ENCODE measurements at regions of chr12 and their contacts with region 1.

Region 1: GRCh38 chr12:56189176-56189917 is at the start of gene SMARCC2:
- DNase-seq: peak; percentile 94
- ATAC-seq: peak; percentile 82
- H3K4me3 Mint-ChIP-seq: peak within 1 kb of the TSS; percentile 82
- H3K27ac Mint-ChIP-seq: peak within 1 kb of the TSS; percentile 96
- H3K4me1 Mint-ChIP-seq: peaks cover 38% of the 10 kb centered on the region
- H3K27me3 Mint-ChIP-seq: no peaks in the 10 kb centered on the region
- total RNA-seq, gene SMARCC2: 96.9 to 123 TPM

Region 2: GRCh38 chr12:56127888-56128669 is 61.3 kb before region 1 on chr12 and contains the start of gene ESYT1:
- CTCF ChIA-PET with region 1: interaction called, 112 read pairs
- POLR2A ChIA-PET with region 1: interaction called, 13 read pairs
- intact Hi-C with region 1: loop called (anchors 1 to 2 kb)
- DNase-seq: peak; percentile 98
- ATAC-seq: peak; percentile 96
- H3K4me3 Mint-ChIP-seq: peak within 1 kb of the TSS; percentile 93
- H3K27ac Mint-ChIP-seq: peak within 1 kb of the TSS; percentile 95
- H3K4me1 Mint-ChIP-seq: peaks cover 55% of the 10 kb centered on the region
- H3K27me3 Mint-ChIP-seq: no peaks in the 10 kb centered on the region
- total RNA-seq, gene ESYT1: 132 to 160 TPM

Region 3: DNA sequence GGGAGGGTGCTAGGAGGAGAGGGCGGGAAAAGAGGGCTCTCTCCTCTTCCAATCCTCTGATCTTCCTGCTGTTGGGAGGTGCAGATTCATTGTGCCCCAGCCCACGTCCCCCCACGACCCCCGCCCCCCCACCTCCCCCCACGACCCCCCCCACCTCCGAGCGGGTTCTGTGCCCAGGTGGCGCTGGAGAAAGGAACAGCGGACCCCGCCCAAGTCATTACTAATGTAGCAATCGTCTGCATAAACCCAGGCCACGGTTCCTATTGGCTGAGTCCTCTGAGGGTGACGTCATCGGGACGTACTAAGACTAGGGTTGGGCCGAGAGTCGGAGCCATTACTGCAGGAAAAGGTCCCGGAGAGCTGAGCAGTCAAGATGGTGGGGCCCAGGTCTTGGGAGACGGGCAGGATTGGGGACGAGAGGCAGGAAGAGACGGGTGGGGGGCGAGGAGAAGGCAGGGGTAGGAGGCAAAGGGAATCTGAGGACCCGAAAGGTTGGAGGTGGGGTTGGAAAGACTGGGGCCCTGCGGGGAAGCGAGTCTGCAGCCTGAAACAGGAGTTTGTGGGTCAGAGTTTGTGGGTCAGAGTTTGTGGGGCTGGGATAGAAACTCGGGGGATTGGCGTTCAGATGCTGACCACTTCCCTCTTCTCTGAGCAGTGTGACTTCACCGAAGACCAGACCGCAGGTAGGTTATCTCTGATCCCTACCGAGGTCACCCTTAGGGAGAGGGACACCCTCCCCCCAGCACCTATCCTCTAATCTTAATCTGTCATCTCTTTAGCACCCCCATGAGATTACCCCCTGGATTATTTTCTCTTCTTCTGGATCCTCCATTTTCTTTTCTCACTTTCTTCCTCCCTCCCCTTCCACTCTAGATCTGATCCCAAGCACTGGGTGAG is 31.1 kb before region 1 on chr12 and contains the start of gene MYL6:
- CTCF ChIA-PET with region 1: interaction called, 18 read pairs
- POLR2A ChIA-PET with region 1: interaction called, 6 read pairs
- intact Hi-C with region 1: loop called (anchors 1 kb)
- DNase-seq: peak; percentile 96
- ATAC-seq: peak; percentile 85
- H3K4me3 Mint-ChIP-seq: peak within 1 kb of the TSS; percentile 99
- H3K27ac Mint-ChIP-seq: peak within 1 kb of the TSS; percentile 96
- H3K4me1 Mint-ChIP-seq: peaks cover 30% of the 10 kb centered on the region
- H3K27me3 Mint-ChIP-seq: no peaks in the 10 kb centered on the region
- total RNA-seq, gene MYL6: 692 to 918 TPM

Region 4: GRCh38 chr12:56206457-56207166 is 17.3 kb after region 1 on chr12:
- CTCF ChIA-PET with region 1: interaction called, 11 read pairs
- POLR2A ChIA-PET with region 1: interaction called, 3 read pairs
- intact Hi-C with region 1: no loop called
- DNase-seq: peak; percentile 69
- ATAC-seq: peak; percentile 84
- H3K4me3 Mint-ChIP-seq: no peak overlapping the region
- H3K27ac Mint-ChIP-seq: no peak overlapping the region
- H3K4me1 Mint-ChIP-seq: peaks cover 4% of the 10 kb centered on the region
- H3K27me3 Mint-ChIP-seq: no peaks in the 10 kb centered on the region

Region 5: GRCh38 chr12:56266693-56267442 is 77.5 kb after region 1 on chr12 and contains the start of gene COQ10A:
- CTCF ChIA-PET with region 1: interaction called, 11 read pairs
- POLR2A ChIA-PET with region 1: no interaction called
- intact Hi-C with region 1: loop called in 1 of 2 experiments (anchors 2 kb)
- DNase-seq: peak; percentile 90
- ATAC-seq: peak; percentile 90
- H3K4me3 Mint-ChIP-seq: peak within 1 kb of the TSS; percentile 89
- H3K27ac Mint-ChIP-seq: peak within 1 kb of the TSS; percentile 89
- H3K4me1 Mint-ChIP-seq: peaks cover 9% of the 10 kb centered on the region
- H3K27me3 Mint-ChIP-seq: no peaks in the 10 kb centered on the region
- total RNA-seq, gene COQ10A: 5.2 to 7.5 TPM

Region 6: DNA sequence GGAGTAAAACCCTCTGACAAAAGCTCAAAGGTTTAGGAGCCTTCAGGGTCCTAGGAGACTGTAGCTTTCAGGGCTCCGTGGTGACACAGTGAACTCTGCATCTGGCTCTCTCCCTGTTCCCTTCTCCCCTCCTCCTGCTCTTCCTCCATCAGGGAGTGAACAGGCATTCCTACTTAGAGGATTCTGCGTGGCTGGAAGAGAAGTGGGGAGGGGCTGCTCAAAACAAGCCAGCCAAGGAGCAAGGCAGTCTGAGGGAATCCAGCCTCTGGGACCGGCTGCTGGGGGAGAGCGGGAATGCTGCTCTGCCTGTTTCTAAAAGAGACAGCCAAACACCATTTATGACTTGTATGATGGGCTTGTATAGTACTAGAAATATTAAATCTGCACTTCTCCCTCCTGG is 381.8 kb after region 1 on chr12:
- CTCF ChIA-PET with region 1: no interaction called
- POLR2A ChIA-PET with region 1: no interaction called
- intact Hi-C with region 1: loop called in 1 of 2 experiments (anchors 5 kb)
- DNase-seq: no peak
- ATAC-seq: no peak
- H3K4me3 Mint-ChIP-seq: no peak overlapping the region
- H3K27ac Mint-ChIP-seq: no peak overlapping the region
- H3K4me1 Mint-ChIP-seq: peaks cover 25% of the 10 kb centered on the region
- H3K27me3 Mint-ChIP-seq: no peaks in the 10 kb centered on the region